PC-9 (cell line): ENCODE measurements at regions of chr20 and their contacts with region 1.

Region 1: DNA sequence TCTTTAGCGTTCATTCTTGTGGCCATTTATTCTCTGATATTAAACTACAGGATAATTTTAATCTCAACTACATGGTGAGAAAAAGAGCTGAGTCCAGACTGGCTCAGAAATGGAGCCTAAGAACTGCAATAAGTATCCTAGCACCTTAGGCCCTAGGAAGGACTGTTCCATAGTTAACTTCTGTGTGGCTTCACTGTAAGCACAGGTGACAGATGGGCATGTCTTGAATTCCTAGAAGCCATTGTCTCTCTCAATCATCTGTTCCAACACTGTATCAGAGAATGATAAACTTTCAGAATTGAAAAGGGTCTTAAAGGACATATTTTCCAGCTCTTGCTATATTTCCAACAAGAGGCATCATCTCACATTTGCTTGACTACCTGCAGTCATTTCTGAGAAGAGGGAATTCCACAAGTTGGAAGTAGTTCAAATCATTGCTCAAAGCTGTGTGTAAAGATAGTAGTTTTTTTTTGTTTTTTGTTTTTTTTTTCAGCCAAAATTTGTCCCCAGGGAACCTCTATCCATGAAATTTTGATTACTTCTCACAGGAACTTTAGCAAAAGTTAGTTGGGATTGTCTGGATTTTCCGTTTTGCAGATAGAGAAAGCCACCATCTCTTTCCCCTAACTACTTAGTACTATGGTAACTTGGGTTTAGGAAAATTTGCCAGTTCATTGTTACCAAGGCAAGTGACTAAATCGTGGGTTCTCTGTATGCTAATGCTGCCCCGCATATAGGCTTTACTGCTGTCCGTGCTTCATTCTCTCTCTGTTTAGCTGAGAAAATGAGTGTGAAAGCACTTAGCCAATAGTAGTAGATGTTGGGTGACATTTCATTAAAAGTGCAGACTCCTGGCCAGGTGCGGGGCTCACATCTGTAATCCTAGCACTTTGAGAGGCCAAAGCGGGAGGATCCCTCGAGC is 47.2 kb downstream of the KCNS1 start:
- DNase-seq: no peak
- H3K4me3 ChIP-seq: no peak overlapping the region
- H3K27ac ChIP-seq: no peak overlapping the region
- H3K4me1 ChIP-seq: no peaks in the 10 kb centered on the region
- H3K27me3 ChIP-seq: no peaks in the 10 kb centered on the region
- CTCF ChIP-seq: no peak

Region 2: GRCh38 chr20:43781215-43781614 is 1272.5 kb before region 1 on chr20:
- CTCF ChIA-PET with region 1: no interaction called
- POLR2A ChIA-PET with region 1: interaction called, 11 read pairs
- intact Hi-C with region 1: no loop called
- DNase-seq: no peak
- H3K4me3 ChIP-seq: no peak overlapping the region
- H3K27ac ChIP-seq: peak overlapping the region; percentile 39
- H3K4me1 ChIP-seq: peaks cover 20% of the 10 kb centered on the region
- H3K27me3 ChIP-seq: no peaks in the 10 kb centered on the region
- CTCF ChIP-seq: no peak

Region 3: GRCh38 chr20:45028424-45029136 is 25.1 kb before region 1 on chr20:
- CTCF ChIA-PET with region 1: no interaction called
- POLR2A ChIA-PET with region 1: no interaction called
- intact Hi-C with region 1: no loop called
- DNase-seq: no peak
- H3K4me3 ChIP-seq: no peak overlapping the region
- H3K27ac ChIP-seq: no peak overlapping the region
- H3K4me1 ChIP-seq: no peaks in the 10 kb centered on the region
- H3K27me3 ChIP-seq: no peaks in the 10 kb centered on the region
- CTCF ChIP-seq: no peak

Region 4: GRCh38 chr20:45111799-45112471 is 58.2 kb after region 1 on chr20:
- CTCF ChIA-PET with region 1: interaction called, 17 read pairs
- POLR2A ChIA-PET with region 1: no interaction called
- intact Hi-C with region 1: no loop called
- DNase-seq: no peak
- H3K4me3 ChIP-seq: no peak overlapping the region
- H3K27ac ChIP-seq: no peak overlapping the region
- H3K4me1 ChIP-seq: no peaks in the 10 kb centered on the region
- H3K27me3 ChIP-seq: no peaks in the 10 kb centered on the region
- CTCF ChIP-seq: peak; percentile 77